ENCODE measurements at regions of chr4 and their contacts with region 1.

Region 1: DNA sequence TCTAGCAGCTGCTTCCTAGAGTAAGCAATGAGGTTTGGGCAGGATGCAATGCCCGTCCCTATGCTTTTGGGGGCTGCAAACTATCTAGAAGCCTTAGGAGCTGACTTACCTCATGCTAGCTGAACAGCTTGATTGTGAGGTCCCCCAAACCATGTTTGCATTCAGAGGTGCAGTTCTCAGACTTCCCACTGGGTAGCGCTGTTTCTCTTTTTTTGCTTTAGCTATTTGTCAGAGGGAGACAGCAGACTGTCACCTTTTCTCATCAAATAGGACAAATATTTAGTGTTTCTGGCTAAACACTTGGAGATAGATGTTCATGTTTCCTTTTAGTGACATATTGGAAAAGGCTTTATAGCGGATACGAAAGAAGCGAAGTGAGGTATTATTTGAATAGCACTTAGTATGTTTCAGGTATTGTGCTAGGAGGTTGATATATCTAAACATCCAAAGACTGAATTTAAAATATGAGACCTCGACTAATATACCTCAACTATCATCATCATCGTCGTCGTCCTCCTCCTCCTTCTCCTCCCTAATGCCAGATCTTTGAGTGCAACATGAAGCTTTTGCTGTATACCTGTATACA is 18.7 kb upstream of the TMEM192 start:
- DNase-seq: peak; percentile 36 to 96
- H3K4me3 ChIP-seq: no peak overlapping the region
- H3K27ac ChIP-seq: no peak overlapping the region
- H3K4me1 ChIP-seq: no peaks in the 10 kb centered on the region
- H3K27me3 ChIP-seq: no peaks in the 10 kb centered on the region
- CTCF ChIP-seq: peak; percentile 54 to 89 (median 86)
- EP300 ChIP-seq: no peak
- POLR2A ChIP-seq: no peak
- RAD21 ChIP-seq: peak; percentile 92 to 94

Region 2: GRCh38 chr4:165112368-165113139 is 18.8 kb before region 1 on chr4 and contains the start of gene TMEM192:
- CTCF ChIA-PET with region 1: interaction called, 28 read pairs
- POLR2A ChIA-PET with region 1: interaction called, 3 read pairs
- DNase-seq: peak; percentile 73 to 97
- H3K4me3 ChIP-seq: peak within 1 kb of the TSS; percentile 66 to 86 (median 74)
- H3K27ac ChIP-seq: peak within 1 kb of the TSS; percentile 13; the same call in 1 of the 2 replicates
- H3K4me1 ChIP-seq: peaks cover 0 to 3% (median 0%) of the 10 kb centered on the region in 4 experiments; a peak in 1 of 7 replicates
- H3K27me3 ChIP-seq: peaks cover 0 to 1% (median 0%) of the 10 kb centered on the region in 4 experiments; a peak in 1 of 7 replicates
- CTCF ChIP-seq: peak; percentile 11 to 39 (median 25); a peak in 3 of 4 replicates
- EP300 ChIP-seq: no peak
- POLR2A ChIP-seq: peak; percentile 72 to 85
- RAD21 ChIP-seq: no peak
- total RNA-seq, gene TMEM192: 10.2 and 10.9 TPM in 2 replicates

Region 3: GRCh38 chr4:165234766-165235165 is 103.4 kb after region 1 on chr4:
- CTCF ChIA-PET with region 1: no interaction called
- POLR2A ChIA-PET with region 1: no interaction called
- DNase-seq: no peak
- H3K4me3 ChIP-seq: no peak overlapping the region
- H3K27ac ChIP-seq: no peak overlapping the region
- H3K4me1 ChIP-seq: no peaks in the 10 kb centered on the region; a peak in 1 of 7 replicates
- H3K27me3 ChIP-seq: no peaks in the 10 kb centered on the region
- CTCF ChIP-seq: no peak
- EP300 ChIP-seq: no peak
- POLR2A ChIP-seq: no peak
- RAD21 ChIP-seq: no peak

Region 4: DNA sequence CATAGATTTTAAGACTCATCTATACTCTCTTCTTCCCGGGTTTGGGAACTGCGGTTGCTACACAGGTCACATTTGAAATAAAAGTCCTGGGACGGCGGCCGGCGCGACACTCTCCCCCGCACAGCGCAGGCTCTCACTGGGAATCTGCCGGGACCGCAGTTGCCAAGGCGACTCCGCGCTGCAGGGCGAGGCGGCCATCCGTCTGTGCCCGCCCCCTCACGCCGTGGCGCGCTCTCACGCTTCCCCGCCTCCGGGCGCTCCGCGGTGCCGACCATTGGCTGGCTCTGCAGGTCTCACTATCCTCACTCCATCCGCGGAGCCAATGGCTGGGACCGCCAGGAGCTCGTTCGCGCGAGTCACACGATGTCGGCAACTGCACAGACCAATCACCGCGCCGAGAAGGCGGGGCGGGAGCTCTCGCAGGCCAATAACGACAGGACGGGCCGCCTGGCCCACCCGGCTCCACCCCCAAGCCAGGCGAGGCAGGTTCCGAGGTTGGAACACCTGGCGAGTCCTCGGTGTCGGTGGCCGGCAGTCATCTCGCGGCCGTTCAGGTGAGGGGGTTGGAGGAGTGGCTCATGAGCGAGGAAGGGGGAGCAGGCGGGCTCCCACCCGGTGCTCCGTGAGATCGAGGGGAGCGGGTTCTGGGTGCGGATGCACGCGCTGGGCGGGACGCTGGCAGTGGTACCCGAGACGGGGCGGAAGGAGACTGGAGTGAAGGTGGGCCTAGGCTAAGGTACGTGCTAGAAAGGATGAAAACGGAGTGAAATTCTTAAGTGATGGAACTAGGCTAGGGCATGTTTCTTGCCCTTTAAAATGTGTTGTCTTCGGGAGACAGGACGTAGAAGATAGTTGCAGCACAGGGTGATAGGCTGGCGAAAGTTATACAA is 196.1 kb after region 1 on chr4 and contains the start of gene MSMO1:
- CTCF ChIA-PET with region 1: interaction called, 13 read pairs
- POLR2A ChIA-PET with region 1: interaction called, 4 read pairs
- DNase-seq: peak; percentile 95 to 98
- H3K4me3 ChIP-seq: peak within 1 kb of the TSS; percentile 93 to 98 (median 96)
- H3K27ac ChIP-seq: peak within 1 kb of the TSS; percentile 75
- H3K4me1 ChIP-seq: peaks cover 5 to 9% (median 7%) of the 10 kb centered on the region in 4 experiments
- H3K27me3 ChIP-seq: no peaks in the 10 kb centered on the region
- CTCF ChIP-seq: no peak
- EP300 ChIP-seq: no peak
- POLR2A ChIP-seq: peak; percentile 68 to 73; a peak in 2 of 3 replicates
- RAD21 ChIP-seq: no peak
- total RNA-seq, gene MSMO1: 105 and 109 TPM in 2 replicates

Region 5: GRCh38 chr4:165343353-165344191 is 212.2 kb after region 1 on chr4:
- CTCF ChIA-PET with region 1: interaction called, 235 read pairs
- POLR2A ChIA-PET with region 1: interaction called, 8 read pairs
- DNase-seq: no peak
- H3K4me3 ChIP-seq: no peak overlapping the region
- H3K27ac ChIP-seq: no peak overlapping the region
- H3K4me1 ChIP-seq: no peaks in the 10 kb centered on the region
- H3K27me3 ChIP-seq: no peaks in the 10 kb centered on the region
- CTCF ChIP-seq: peak; percentile 20 to 57 (median 54)
- EP300 ChIP-seq: no peak
- POLR2A ChIP-seq: no peak; a peak in 1 of 3 replicates
- RAD21 ChIP-seq: peak; percentile 76 to 82

Region 6: DNA sequence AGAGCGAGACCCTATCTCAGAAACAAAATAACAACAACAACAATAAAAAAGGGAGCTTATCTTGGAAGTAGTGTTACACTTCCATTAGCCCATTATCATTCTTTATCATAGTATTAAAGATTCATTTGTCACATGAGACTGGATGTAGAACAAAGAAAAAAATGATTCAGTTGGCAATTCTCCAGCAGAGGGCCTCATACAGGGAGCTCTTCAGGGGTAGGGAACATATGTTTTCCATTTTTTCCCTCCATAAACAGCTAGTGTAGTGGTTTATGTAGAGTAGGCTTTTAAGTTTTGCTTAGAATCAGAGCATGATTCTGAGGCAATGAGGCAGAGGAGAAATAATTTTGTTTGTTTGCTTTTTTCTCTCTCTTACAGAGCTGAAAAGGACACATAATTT is 253.3 kb after region 1 on chr4:
- CTCF ChIA-PET with region 1: interaction called, 10 read pairs
- POLR2A ChIA-PET with region 1: no interaction called
- DNase-seq: no peak
- H3K4me3 ChIP-seq: no peak overlapping the region
- H3K27ac ChIP-seq: no peak overlapping the region
- H3K4me1 ChIP-seq: peaks cover 0 to 4% (median 3%) of the 10 kb centered on the region in 4 experiments; a peak in 3 of 7 replicates
- H3K27me3 ChIP-seq: peaks cover 0 to 7% (median 4%) of the 10 kb centered on the region in 4 experiments; a peak in 2 of 7 replicates
- CTCF ChIP-seq: peak in 1 of 3 experiments; percentile 38; a peak in 2 of 4 replicates
- EP300 ChIP-seq: no peak
- POLR2A ChIP-seq: no peak
- RAD21 ChIP-seq: 0 out of 4 replicates have a peak, but pooled peaks of 1 of the 2 experiments have one; percentile 6